SK-N-SH (cell line): ENCODE measurements at regions of chr9 and their contacts with region 1.

Region 1: DNA sequence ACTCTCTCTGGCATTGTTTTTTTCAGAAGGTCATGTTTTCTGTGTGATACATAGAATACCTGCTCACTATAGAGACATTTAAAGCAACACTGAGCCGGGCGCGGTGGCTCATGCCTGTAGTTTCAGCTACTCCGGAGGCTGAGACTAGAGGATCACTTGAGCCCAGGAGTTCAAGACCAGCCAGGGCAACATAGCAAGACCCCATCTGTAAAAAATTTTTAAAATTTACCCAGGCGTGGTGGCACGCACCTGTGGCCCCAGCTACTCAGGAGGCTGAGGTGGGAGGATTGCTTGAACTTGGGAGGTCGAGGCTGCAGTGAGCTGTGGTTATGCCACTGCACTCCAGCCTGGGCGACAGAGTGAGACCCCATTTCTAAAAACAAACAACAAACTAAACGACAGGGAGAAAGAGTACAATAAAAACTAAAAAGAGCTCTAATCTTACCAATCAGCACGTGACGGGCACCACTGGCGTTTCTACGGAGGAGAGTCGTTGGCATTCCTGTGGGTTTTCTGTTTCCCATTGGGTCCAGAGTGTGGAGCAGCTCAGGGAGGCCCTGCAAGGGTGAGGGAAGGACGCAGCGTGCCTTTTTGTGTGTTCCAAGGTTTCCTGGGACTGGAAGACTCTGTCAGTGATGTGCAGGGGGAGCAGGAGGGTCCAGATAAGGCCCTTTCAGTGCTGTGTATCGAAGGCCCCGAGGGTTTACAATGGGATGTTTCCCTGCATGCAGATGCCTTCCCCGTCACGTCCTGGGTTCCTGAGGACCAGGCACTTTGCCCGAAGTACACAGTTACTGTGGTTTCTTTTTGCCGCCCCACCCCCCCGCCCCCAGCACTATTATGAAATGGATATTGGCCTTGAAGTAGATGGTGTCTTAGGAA is 7.2 kb upstream of the RNU6ATAC start:
- DNase-seq: no peak
- H3K4me3 ChIP-seq: no peak overlapping the region
- H3K27ac ChIP-seq: no peak overlapping the region
- H3K4me1 ChIP-seq: peaks cover 0 to 7% of the 10 kb centered on the region in 2 experiments; a peak in 1 of 4 replicates
- H3K27me3 ChIP-seq: peaks cover 6% of the 10 kb centered on the region; the same call in 1 of the 2 replicates
- CTCF ChIP-seq: no peak
- EP300 ChIP-seq: no peak
- RAD21 ChIP-seq: no peak

Region 2: DNA sequence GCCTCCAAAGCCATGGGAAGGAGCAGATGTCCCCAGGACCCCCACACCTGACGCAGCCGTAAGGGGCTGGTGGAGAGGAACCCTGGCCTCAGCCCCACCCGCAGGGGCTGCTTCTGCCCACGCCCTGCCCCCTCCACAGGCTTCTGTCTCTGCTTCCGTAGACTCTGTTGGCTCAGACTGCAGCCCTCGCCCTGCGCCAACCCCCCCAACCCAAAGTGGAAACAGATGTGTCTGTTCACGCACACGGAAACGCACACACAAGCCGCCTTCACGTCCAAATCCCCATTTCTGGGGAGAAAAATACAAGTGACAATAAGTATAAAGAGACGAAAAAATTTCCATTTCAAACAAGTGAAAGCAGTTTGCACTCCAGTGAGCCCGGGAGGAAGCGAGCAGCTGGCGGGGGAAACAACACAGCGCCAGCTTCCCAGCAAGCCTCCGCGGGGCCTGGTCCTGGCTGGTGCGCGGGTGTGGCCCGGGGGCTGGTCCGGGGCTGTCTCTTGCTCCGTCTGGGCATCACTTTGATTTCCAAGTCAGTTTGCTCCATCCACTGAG is 122.1 kb after region 1 on chr9:
- CTCF ChIA-PET with region 1: interaction called, 18 read pairs
- POLR2A ChIA-PET with region 1: no interaction called
- DNase-seq: peak; percentile 92
- H3K4me3 ChIP-seq: peak overlapping the region in 1 of 2 experiments; percentile 24; a peak in 1 of 4 replicates
- H3K27ac ChIP-seq: peak overlapping the region in 1 of 2 experiments; percentile 99; a peak in 2 of 4 replicates
- H3K4me1 ChIP-seq: peaks cover 3 to 38% of the 10 kb centered on the region in 2 experiments; a peak in 1 of 4 replicates
- H3K27me3 ChIP-seq: no peaks in the 10 kb centered on the region; the same call in 1 of the 2 replicates
- CTCF ChIP-seq: no peak
- EP300 ChIP-seq: peak in 1 of 2 experiments; percentile 36; a peak in 1 of 4 replicates
- RAD21 ChIP-seq: no peak

Region 3: DNA sequence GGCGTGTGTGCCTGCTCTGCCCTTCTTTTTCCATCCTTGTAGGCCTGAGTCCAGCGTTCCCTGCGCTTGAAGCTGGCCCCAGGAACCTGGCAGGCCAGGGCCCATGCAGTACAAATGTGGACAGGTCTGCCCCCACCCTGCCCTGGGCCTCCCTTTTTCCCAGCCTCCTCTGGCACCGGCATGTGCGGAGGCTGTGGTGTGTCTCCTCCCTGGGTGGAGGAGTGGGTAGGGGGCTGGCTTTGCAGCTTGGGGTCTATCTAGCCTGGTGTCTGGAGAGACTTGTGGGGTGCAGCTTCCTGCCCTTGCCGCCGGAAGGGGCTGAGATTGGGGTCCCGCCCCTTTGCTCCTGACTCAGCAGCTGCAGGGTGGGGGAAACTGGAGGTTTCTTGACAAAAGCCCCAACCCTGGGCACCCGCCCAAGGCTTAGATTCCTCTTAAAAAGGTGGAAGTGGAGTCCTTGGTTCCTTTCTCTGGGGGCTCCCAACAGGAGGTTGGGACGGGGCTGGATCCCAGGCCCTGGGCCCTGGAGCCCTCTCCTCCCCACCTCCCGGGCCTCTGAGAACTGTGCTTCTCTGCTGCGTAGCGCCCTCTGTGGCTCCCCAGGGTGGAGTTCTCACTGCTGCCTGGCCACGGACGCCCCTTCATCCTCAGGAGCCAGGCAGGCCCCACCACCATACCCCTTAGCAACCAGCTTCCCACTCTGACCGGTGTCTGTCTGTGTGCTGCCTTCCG is 172.7 kb after region 1 on chr9:
- CTCF ChIA-PET with region 1: interaction called, 12 read pairs
- POLR2A ChIA-PET with region 1: no interaction called
- DNase-seq: no peak
- H3K4me3 ChIP-seq: no peak overlapping the region
- H3K27ac ChIP-seq: no peak overlapping the region
- H3K4me1 ChIP-seq: peaks cover 0 to 77% of the 10 kb centered on the region in 2 experiments; a peak in 1 of 4 replicates
- H3K27me3 ChIP-seq: no peaks in the 10 kb centered on the region
- CTCF ChIP-seq: peak; percentile 13; the same call in 1 of the 2 replicates
- EP300 ChIP-seq: no peak
- RAD21 ChIP-seq: no peak

Region 4: GRCh38 chr9:134378901-134379338 is 207.4 kb after region 1 on chr9:
- CTCF ChIA-PET with region 1: interaction called, 14 read pairs
- POLR2A ChIA-PET with region 1: no interaction called
- DNase-seq: peak; percentile 58
- H3K4me3 ChIP-seq: no peak overlapping the region
- H3K27ac ChIP-seq: no peak overlapping the region; a peak in 1 of 4 replicates
- H3K4me1 ChIP-seq: peaks cover 9 to 77% of the 10 kb centered on the region in 2 experiments; a peak in 3 of 4 replicates
- H3K27me3 ChIP-seq: no peaks in the 10 kb centered on the region
- CTCF ChIP-seq: no peak
- EP300 ChIP-seq: no peak
- RAD21 ChIP-seq: no peak

Region 5: DNA sequence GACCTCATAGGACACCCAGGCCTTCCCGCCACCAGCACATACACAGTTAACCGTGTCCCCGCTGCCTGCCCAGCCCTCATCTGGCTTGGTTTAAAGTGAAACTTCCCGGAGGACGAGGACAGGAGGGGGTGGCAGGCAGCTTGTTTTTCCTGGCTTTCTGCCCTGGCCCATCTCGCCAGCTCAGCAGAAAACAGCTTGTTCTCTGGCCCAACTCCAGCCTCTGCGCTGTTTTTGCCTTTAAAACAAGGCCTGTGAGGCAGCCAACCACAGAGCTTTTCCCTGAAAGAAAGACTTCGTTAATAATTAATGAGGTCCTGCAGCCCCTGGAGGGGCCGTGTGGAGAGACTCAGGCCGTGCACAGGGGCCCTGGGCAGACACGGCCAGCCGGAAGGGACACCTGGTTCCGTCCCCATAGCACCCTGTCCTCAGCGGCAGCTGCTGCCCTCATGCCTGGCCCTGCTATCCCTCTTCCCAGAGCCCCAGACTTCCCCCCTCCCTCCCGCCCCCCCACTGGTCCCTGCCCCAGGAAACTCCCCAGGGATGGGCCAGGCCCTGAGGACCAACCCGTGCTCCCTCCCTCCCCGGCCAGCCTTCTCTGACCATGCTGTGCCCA is 263.4 kb after region 1 on chr9:
- CTCF ChIA-PET with region 1: interaction called, 28 read pairs
- POLR2A ChIA-PET with region 1: no interaction called
- DNase-seq: peak; percentile 97
- H3K4me3 ChIP-seq: no peak overlapping the region
- H3K27ac ChIP-seq: peak overlapping the region; percentile 72 to 96
- H3K4me1 ChIP-seq: peaks cover 18 to 49% of the 10 kb centered on the region in 2 experiments; a peak in 3 of 4 replicates
- H3K27me3 ChIP-seq: no peaks in the 10 kb centered on the region
- CTCF ChIP-seq: no peak
- EP300 ChIP-seq: peak; percentile 77 to 78; a peak in 3 of 4 replicates
- RAD21 ChIP-seq: peak; percentile 18; the same call in 1 of the 2 replicates